H1 (cell line): ENCODE measurements at regions of chr1 and their contacts with region 1.

Region 1: DNA sequence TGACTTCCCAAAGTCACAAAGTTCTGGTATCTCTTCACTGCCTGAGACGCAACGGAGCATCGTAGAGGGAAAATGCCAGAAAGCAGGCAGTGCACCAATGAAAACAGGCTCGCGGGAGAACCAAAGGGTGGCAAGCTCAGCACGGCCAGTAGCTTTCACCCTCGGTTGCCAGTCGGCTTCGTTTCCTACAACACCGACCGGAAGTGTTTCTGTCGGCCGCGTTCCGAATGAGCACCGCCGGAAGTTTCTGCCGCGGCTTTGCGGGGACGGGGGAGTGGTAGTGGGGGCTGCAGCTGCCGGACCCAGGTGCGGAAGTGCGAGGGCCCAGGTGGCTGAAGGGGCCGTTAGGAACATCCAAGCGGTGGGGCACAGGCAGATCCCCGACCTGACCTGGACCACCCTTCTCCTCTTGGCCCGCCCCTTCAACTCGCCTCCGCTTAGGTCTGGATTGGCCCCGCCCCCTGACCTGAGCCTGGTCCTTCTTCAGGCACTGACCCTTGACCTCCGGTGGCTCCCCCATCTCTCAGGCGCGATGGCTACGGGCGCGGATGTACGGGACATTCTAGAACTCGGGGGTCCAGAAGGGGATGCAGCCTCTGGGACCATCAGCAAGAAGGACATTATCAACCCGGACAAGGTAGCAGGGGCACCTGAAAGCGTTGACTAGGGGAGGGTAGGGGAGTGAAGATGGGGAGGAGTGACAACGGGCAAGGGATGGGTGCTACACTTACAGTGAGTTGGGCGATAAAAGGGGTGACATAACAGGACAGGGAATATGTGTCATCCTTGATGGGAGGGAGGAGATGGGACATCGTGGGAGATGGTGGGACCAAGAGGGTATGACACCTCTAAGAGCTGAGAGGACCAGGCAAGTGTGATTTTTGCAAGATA is at the start of gene DMAP1:
- DNase-seq: peak; percentile 60 to 94
- H3K4me3 ChIP-seq: peak within 1 kb of the TSS; percentile 72 to 89 (median 82)
- H3K27ac ChIP-seq: peak within 1 kb of the TSS; percentile 49; the same call in 1 of the 2 replicates
- H3K4me1 ChIP-seq: peaks cover 0 to 7% (median 2%) of the 10 kb centered on the region in 4 experiments; a peak in 3 of 7 replicates
- H3K27me3 ChIP-seq: peaks cover 0 to 5% (median 2%) of the 10 kb centered on the region in 4 experiments; a peak in 2 of 7 replicates
- CTCF ChIP-seq: peak in 1 of 3 experiments; percentile 20; a peak in 1 of 4 replicates
- EP300 ChIP-seq: peak in 1 of 2 experiments; percentile 74; a peak in 1 of 3 replicates
- POLR2A ChIP-seq: peak in 1 of 2 experiments; percentile 71; a peak in 2 of 3 replicates
- RAD21 ChIP-seq: peak; percentile 37 to 52; a peak in 3 of 4 replicates
- total RNA-seq, gene DMAP1: 36.4 and 37.6 TPM in 2 replicates

Region 2: DNA sequence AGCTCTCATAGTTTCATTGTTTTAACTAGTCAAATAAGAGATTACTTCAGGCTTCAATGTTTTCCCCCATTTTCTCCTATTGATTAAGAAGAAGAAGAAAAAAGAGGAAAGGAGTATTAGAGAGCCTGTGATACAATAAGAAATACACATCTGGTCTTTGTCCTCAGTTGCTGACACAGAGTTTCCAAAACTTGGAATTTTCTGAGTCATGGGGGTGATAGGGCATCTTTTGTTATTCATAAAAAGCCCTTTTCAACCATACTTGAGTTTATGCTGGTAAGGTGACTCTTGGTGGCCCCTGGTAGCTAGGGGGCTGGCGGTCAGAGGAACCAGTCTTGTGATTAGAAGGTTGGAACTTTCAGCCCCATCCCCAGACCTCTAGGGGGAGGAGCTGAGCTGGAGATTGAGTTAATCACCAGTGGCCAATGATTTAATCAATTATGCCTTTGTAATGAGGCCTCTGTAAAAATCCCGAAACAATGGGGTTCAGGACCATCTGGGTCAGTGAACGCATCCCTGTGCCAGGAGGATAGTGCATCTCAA is 43.1 kb before region 1 on chr1:
- CTCF ChIA-PET with region 1: interaction called, 14 read pairs
- POLR2A ChIA-PET with region 1: no interaction called
- DNase-seq: no peak
- H3K4me3 ChIP-seq: no peak overlapping the region
- H3K27ac ChIP-seq: no peak overlapping the region
- H3K4me1 ChIP-seq: no peaks in the 10 kb centered on the region; a peak in 1 of 7 replicates
- H3K27me3 ChIP-seq: no peaks in the 10 kb centered on the region
- CTCF ChIP-seq: peak in 2 of 3 experiments; percentile 13 to 26; a peak in 2 of 4 replicates
- EP300 ChIP-seq: no peak
- POLR2A ChIP-seq: no peak
- RAD21 ChIP-seq: peak; percentile 14 to 40; a peak in 3 of 4 replicates

Region 3: DNA sequence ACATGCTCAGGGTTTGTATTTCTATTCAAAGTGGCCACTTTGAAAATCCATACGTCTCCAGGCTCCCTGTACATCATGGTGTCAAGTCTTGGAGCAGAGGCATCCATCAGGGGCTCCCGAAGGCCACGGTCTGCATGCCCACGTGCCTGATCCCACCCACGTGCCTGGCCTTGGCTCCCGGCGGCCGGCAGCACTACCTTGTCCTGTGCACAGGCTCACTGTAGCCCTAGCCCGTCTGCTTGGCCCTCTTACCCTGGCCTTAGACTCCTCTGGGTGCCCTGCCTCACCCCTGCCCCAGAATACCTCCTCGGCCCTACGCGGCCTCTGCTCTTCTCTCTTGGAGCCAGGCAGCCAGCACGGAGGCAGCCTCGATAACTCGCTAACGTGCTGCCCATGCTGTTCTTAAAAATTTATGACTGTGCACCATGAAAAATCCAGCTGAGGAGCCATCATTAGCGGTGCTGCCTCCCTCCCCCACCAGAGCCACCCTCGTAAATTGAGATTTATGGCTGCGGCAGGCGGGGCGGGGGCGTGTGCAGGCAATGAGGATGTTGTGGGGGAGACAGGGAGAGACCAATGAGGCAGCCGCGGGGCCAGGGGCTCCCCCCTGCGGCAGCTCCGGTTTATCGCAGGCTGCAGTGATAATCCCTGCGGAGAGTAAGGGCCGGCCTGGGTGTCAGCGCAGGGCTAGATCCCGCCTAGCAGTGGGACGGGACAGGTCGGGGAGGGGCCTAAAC is 24.4 kb after region 1 on chr1:
- CTCF ChIA-PET with region 1: interaction called, 191 read pairs
- POLR2A ChIA-PET with region 1: no interaction called
- DNase-seq: peak; percentile 69 to 91
- H3K4me3 ChIP-seq: peak overlapping the region in 1 of 4 experiments; percentile 31; a peak in 2 of 8 replicates
- H3K27ac ChIP-seq: no peak overlapping the region
- H3K4me1 ChIP-seq: peaks cover 0 to 26% (median 15%) of the 10 kb centered on the region in 4 experiments; a peak in 6 of 7 replicates
- H3K27me3 ChIP-seq: no peaks in the 10 kb centered on the region
- CTCF ChIP-seq: peak; percentile 70 to 86 (median 81)
- EP300 ChIP-seq: no peak
- POLR2A ChIP-seq: no peak
- RAD21 ChIP-seq: peak; percentile 58 to 60

Region 4: DNA sequence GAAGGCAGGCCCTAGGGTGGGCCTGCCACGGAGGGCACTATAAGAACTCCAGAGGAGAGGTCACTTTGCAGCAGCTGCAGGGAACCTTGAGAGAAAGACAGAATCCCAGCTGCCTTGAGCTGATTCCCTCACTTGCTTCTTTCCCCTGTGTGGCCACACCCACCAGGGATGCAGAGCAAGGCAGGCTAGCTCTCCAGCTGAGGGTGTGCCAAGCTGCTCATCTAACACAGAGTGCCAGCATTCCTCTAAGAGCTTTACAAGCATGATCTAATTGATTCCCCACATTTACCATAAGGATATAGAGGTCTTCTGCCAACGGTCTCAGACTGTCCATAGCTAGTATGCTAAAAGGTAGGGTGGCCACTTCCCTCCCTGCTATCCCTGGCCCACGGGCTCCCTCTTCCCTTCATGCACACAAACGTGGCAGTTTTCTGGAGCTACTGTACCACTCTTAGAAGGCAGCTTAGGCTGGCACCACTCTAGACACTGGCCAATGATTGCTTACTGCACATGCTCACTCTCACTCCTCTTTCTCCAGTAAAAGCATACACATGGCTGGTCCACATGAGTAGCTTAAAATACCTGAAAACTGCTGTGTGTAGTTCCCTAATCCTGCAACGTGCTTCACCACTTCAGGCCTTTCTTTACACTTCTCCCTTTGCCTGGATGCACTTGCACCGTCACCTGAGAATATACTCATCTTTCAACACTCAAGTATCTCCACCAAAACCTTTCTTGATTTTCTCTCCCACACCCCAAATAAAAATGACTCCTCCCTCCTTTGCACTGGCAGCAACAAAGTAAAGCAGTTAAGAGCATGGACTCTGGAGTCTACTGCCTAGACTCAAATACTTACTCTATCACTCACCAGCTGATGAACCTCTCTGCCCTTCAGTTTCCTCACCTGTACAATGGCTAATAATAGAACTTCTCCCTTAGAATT is 57.5 kb after region 1 on chr1:
- CTCF ChIA-PET with region 1: interaction called, 18 read pairs
- POLR2A ChIA-PET with region 1: interaction called, 5 read pairs
- DNase-seq: no peak
- H3K4me3 ChIP-seq: no peak overlapping the region
- H3K27ac ChIP-seq: no peak overlapping the region
- H3K4me1 ChIP-seq: no peaks in the 10 kb centered on the region; a peak in 2 of 7 replicates
- H3K27me3 ChIP-seq: no peaks in the 10 kb centered on the region
- CTCF ChIP-seq: no peak
- EP300 ChIP-seq: no peak
- POLR2A ChIP-seq: no peak
- RAD21 ChIP-seq: no peak

Region 5: DNA sequence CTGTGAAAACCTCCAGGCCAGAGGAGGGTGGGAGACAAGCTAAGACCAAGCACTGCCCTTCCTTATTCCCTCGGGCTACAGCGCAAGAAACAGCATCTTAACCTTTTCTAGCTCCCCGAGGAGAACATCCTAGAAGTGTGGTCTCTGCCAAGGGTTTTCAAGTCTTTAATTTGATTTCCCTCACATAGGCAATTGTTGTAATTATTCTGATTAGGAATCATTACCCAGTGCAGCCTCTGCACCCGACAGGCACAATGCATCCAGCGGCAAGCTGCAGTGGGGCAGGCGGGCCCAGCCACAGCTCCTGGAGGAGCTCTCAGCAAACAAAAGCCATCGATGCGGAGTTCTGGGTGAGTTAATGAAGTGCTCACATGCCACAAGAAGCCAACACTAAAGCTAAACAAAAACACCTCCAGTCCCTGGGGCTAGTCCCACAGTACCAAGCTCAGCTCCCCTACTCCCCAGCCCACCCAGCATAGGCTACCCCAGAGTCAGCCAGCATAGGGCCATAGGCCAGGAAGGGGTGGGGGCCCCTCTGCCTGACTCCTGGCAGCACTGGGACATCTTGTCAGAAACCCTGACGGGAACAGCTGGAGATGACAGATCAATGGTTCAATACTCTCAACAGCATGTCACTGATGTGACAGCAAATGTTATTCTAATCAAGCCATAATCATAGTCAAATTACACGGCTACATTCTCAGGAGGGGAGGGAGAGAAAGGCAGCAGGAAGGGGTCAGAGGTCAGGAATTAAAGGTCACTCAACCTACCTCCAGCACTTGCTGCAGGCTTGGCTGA is 99.1 kb after region 1 on chr1:
- CTCF ChIA-PET with region 1: interaction called, 18 read pairs
- POLR2A ChIA-PET with region 1: no interaction called
- DNase-seq: no peak
- H3K4me3 ChIP-seq: no peak overlapping the region
- H3K27ac ChIP-seq: no peak overlapping the region
- H3K4me1 ChIP-seq: peaks cover 0 to 4% (median 3%) of the 10 kb centered on the region in 4 experiments; a peak in 2 of 7 replicates
- H3K27me3 ChIP-seq: peaks cover 0 to under 1% (median 0%) of the 10 kb centered on the region in 4 experiments; a peak in 1 of 7 replicates
- CTCF ChIP-seq: no peak
- EP300 ChIP-seq: no peak
- POLR2A ChIP-seq: no peak
- RAD21 ChIP-seq: no peak

Region 6: GRCh38 chr1:44609412-44609767 is 395.9 kb after region 1 on chr1:
- CTCF ChIA-PET with region 1: interaction called, 14 read pairs
- POLR2A ChIA-PET with region 1: no interaction called
- DNase-seq: peak; percentile 67 to 93
- H3K4me3 ChIP-seq: no peak overlapping the region
- H3K27ac ChIP-seq: no peak overlapping the region
- H3K4me1 ChIP-seq: peaks cover 2 to 18% (median 11%) of the 10 kb centered on the region in 4 experiments; a peak in 6 of 7 replicates
- H3K27me3 ChIP-seq: no peaks in the 10 kb centered on the region
- CTCF ChIP-seq: peak; percentile 78 to 86 (median 84)
- EP300 ChIP-seq: no peak
- POLR2A ChIP-seq: no peak
- RAD21 ChIP-seq: peak; percentile 71 to 83